Activated CD4-positive, alpha-beta T cell treated with anti-CD3 and anti-CD28 coated beads for 36 hours (primary cell): ENCODE measurements at regions of chr9 and their contacts with region 1.

Region 1: GRCh38 chr9:128881901-128882681 is at the starts of genes KYAT1 and LRRC8A:
- DNase-seq: peak; percentile 99
- ATAC-seq: peak; percentile 95
- H3K4me3 Mint-ChIP-seq: peak within 1 kb of the TSS; percentile 94
- H3K27ac Mint-ChIP-seq: peak within 1 kb of the TSS; percentile 91
- H3K4me1 Mint-ChIP-seq: peaks cover 56% of the 10 kb centered on the region
- H3K27me3 Mint-ChIP-seq: no peaks in the 10 kb centered on the region
- total RNA-seq, gene KYAT1: 14.8 to 18.5 TPM
- total RNA-seq, gene LRRC8A: 14.9 to 15.5 TPM

Region 2: DNA sequence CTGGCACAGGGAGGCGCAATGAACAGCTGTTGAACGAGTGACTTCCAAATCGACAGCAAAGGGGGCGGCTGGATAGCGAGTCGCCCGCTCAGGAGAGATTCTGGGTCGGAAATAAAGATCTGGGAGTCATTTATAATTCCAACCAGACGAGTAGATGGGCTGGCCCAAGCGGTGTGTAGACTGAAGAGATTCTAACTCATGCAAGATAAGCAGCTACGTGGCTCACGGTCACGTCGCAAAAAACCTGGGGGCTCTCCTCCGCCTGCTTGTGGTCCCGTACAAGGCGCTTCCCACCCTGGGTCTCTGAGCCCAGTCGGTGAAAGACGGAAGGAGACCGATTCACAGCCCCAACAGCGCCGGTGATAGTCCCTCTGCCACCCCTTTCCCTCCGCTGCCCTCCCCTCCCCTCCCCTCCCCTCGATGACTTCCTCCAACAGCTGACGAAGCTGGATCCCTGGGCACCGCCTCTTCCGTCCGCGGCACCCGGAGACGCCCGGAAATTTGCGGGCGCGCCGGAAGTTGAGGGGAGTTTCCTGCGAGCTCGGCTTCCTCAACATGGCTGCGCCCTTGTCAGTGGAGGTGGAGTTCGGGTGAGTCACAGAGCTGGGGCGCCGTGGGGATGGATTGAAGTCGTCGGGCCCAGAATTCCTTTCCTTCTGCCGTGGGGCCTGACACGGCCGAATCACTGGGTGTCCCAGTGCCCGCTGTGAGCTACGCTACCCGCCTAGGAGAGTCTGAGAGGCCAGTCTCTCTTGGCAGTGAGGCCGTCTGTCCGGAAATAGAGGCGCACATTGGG is 511.1 kb before region 1 on chr9 and contains the start of gene URM1:
- CTCF ChIA-PET with region 1: no interaction called
- POLR2A ChIA-PET with region 1: no interaction called
- intact Hi-C with region 1: loop called in 1 of 2 experiments (anchors 2 kb)
- DNase-seq: peak; percentile 98
- ATAC-seq: peak; percentile 98
- H3K4me3 Mint-ChIP-seq: peak within 1 kb of the TSS; percentile 87
- H3K27ac Mint-ChIP-seq: peak within 1 kb of the TSS; percentile 89
- H3K4me1 Mint-ChIP-seq: peaks cover 27% of the 10 kb centered on the region
- H3K27me3 Mint-ChIP-seq: no peaks in the 10 kb centered on the region
- total RNA-seq, gene URM1: 39.9 to 56.1 TPM

Region 3: GRCh38 chr9:128723866-128724743 is 158.0 kb before region 1 on chr9 and contains the start of gene ZDHHC12:
- CTCF ChIA-PET with region 1: no interaction called
- POLR2A ChIA-PET with region 1: no interaction called
- intact Hi-C with region 1: loop called in 1 of 2 experiments (anchors 1 kb)
- DNase-seq: peak; percentile 100
- ATAC-seq: peak; percentile 98
- H3K4me3 Mint-ChIP-seq: peak within 1 kb of the TSS; percentile 95
- H3K27ac Mint-ChIP-seq: peak within 1 kb of the TSS; percentile 94
- H3K4me1 Mint-ChIP-seq: peaks cover 25% of the 10 kb centered on the region
- H3K27me3 Mint-ChIP-seq: no peaks in the 10 kb centered on the region
- total RNA-seq, gene ZDHHC12: 45.3 to 49.5 TPM

Region 4: DNA sequence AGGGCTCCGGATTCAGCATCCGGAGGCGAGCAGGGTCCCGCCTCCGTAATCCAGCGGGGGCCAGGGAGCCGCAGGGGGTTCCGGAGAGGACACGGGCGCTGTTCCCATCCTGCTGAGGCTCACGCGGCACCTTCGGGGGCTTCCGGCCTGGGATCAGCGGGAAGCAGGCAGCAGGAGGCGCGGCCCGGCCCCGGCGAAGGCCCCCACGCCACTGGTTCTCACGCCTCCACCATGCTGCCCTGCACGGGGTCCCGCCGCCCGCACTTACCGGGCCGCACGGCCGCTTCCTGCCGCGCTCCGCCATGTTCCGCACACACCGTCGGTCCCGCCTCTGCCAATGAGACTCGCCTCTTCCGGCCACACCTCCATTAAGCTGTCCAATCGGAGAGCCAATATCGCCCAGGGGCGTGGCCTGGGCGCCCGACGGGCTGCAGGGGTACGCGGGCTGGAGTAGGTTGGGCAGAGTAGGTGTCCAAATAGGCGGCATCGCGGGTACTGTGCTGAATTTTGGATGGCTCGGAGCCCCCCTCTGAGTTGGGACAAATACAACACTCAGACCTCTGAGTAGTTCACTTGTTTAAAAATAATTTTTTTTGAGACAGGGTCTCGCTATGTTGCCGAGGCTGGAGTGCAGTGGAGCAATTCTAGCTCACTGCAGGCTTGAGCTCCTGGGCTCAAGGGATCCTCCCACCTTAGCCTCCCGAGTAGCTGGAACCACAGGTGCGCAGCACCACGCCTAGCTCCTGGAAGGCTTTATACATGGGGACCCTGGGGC is 52.4 kb before region 1 on chr9 and contains the start of gene SPOUT1:
- CTCF ChIA-PET with region 1: interaction called, 4 read pairs
- POLR2A ChIA-PET with region 1: no interaction called
- intact Hi-C with region 1: loop called in 1 of 2 experiments (anchors 1 kb)
- DNase-seq: peak; percentile 96
- ATAC-seq: peak; percentile 98
- H3K4me3 Mint-ChIP-seq: peak within 1 kb of the TSS; percentile 91
- H3K27ac Mint-ChIP-seq: peak within 1 kb of the TSS; percentile 88
- H3K4me1 Mint-ChIP-seq: peaks cover 23% of the 10 kb centered on the region
- H3K27me3 Mint-ChIP-seq: no peaks in the 10 kb centered on the region
- total RNA-seq, gene SPOUT1: 87.9 to 92.9 TPM

Region 5: DNA sequence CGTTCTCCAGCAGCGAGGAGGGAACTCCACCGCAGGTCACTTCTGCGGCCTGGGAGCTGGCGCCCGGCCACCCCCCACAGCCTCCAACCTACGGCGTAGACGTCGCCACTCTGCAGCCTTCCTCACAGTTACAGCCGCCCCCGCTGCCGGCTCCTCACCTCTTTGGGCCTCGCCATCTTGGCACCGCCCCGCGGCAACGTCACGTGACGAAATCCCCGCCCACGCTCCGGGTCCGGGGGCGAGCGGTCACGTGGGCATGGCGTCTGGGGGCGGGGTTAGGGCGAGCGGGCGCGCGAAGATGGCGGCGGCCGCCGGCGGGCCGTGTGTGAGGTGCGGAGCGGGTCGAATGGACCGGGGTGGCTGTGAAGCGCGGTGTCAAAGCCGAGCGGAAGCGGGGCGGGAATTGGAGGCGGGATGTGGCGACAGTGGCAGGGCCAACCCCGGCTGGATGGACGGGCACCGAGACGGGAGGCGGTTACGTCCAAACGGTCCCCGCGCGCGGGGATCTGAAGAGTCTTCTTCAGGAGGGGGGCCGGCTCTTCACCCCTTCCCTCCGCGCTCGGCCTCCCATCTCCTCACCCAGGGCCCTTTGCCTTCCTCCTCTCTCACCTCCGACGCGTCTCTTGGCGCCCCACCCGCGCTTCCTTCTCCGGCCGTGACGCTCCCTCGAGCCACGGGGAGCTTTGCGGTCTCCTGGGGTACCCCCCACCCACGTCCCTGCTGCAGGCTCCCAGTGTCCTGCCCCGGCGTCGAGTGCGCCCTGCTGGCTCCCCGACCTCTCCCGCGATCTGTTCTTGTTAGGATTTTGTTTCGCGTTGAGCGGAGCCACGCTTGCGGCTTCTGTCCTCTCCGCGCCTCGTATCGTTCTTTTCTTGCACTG is 65.6 kb after region 1 on chr9 and contains the starts of genes DOLK and NUP188:
- CTCF ChIA-PET with region 1: interaction called, 3 read pairs
- POLR2A ChIA-PET with region 1: interaction called, 4 read pairs
- intact Hi-C with region 1: loop called (anchors 1 kb)
- DNase-seq: peak; percentile 99
- ATAC-seq: peak; percentile 80
- H3K4me3 Mint-ChIP-seq: peak within 1 kb of the TSS; percentile 89
- H3K27ac Mint-ChIP-seq: peak within 1 kb of the TSS; percentile 95
- H3K4me1 Mint-ChIP-seq: peaks cover 29% of the 10 kb centered on the region
- H3K27me3 Mint-ChIP-seq: no peaks in the 10 kb centered on the region
- total RNA-seq, gene DOLK: 4.8 to 5.0 TPM
- total RNA-seq, gene NUP188: 102 to 124 TPM

Region 6: GRCh38 chr9:128972956-128973355 is 90.9 kb after region 1 on chr9:
- CTCF ChIA-PET with region 1: no interaction called
- POLR2A ChIA-PET with region 1: no interaction called
- intact Hi-C with region 1: no loop called
- DNase-seq: no peak
- ATAC-seq: no peak
- H3K4me3 Mint-ChIP-seq: no peak overlapping the region
- H3K27ac Mint-ChIP-seq: no peak overlapping the region
- H3K4me1 Mint-ChIP-seq: no peaks in the 10 kb centered on the region
- H3K27me3 Mint-ChIP-seq: no peaks in the 10 kb centered on the region

Region 7: GRCh38 chr9:129202613-129203555 is 320.8 kb after region 1 on chr9:
- CTCF ChIA-PET with region 1: no interaction called
- POLR2A ChIA-PET with region 1: no interaction called
- intact Hi-C with region 1: loop called in 1 of 2 experiments (anchors 5 kb)
- DNase-seq: peak; percentile 95
- ATAC-seq: peak; percentile 95
- H3K4me3 Mint-ChIP-seq: peak overlapping the region; percentile 57
- H3K27ac Mint-ChIP-seq: peak overlapping the region; percentile 31
- H3K4me1 Mint-ChIP-seq: peaks cover 18% of the 10 kb centered on the region
- H3K27me3 Mint-ChIP-seq: peaks cover 3% of the 10 kb centered on the region